ENCODE measurements at regions of chr20 and their contacts with region 1.

Region 1: GRCh38 chr20:2451939-2452732 is 18.5 kb downstream of the SNRPB start:
- DNase-seq: peak; percentile 92
- H3K4me3 ChIP-seq: no peak overlapping the region
- H3K27ac ChIP-seq: no peak overlapping the region
- H3K4me1 ChIP-seq: peaks cover 0 to 7% (median 0%) of the 10 kb centered on the region in 4 donors
- H3K27me3 ChIP-seq: no peaks in the 10 kb centered on the region
- CTCF ChIP-seq: peak; percentile 56 to 90 (median 73)
- EP300 ChIP-seq: no peak
- POLR2A ChIP-seq: no peak

Region 2: DNA sequence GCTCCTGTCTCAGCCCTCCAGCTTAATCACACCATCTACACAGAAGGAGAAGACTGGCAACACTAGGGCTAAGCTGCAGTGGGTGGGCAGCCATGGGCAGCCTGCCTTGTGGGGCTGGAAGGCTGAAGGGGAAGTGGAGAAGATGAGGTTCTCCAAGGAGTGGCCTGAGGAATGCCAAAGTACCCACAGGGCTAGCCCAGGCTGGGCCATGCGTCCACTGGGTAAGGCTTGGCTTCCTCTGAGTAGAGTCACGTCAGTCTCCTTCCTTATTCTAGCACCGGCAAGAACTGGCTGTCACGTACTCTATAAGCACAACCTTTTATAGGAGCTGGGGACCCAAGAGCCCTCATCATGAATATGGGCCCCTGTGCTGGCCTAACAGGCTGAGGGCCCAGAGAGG is 667.5 kb before region 1 on chr20:
- intact Hi-C with region 1: loop called (anchors 10 kb)
- DNase-seq: peak; percentile 68
- H3K4me3 ChIP-seq: no peak overlapping the region
- H3K27ac ChIP-seq: no peak overlapping the region
- H3K4me1 ChIP-seq: no peaks in the 10 kb centered on the region
- H3K27me3 ChIP-seq: peaks cover 0 to 57% (median 0%) of the 10 kb centered on the region in 4 donors
- CTCF ChIP-seq: no peak
- EP300 ChIP-seq: no peak
- POLR2A ChIP-seq: no peak

Region 3: GRCh38 chr20:2206957-2207769 is 245.0 kb before region 1 on chr20:
- intact Hi-C with region 1: loop called (anchors 5 kb)
- DNase-seq: no peak
- H3K4me3 ChIP-seq: peak overlapping the region; percentile 51 to 64 (median 58)
- H3K27ac ChIP-seq: no peak overlapping the region
- H3K4me1 ChIP-seq: peaks cover 13 to 14% (median 14%) of the 10 kb centered on the region in 4 donors
- H3K27me3 ChIP-seq: peaks cover 3 to 68% (median 7%) of the 10 kb centered on the region in 4 donors
- CTCF ChIP-seq: peak; percentile 53 to 61 (median 59)
- EP300 ChIP-seq: no peak
- POLR2A ChIP-seq: no peak

Region 4: DNA sequence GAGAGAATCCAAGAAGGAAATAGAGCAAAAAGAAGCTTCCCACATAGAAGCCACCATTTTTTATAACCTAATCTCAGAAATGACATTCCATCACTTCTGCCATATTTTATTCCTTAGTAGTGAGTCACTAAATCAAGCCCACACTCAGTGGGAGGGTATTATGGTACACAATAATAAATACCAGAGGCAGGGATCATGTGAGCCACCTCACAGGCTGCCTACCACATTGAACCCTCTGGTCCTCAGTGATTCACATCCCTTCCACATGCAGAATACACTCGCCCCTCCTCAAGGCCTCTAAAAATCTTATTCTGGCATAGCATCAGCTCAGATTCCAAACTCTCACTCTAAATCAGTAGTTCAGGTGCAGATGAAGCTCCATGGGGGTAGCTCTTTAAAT is 133.7 kb after region 1 on chr20:
- intact Hi-C with region 1: no loop called
- DNase-seq: peak; percentile 47
- H3K4me3 ChIP-seq: no peak overlapping the region
- H3K27ac ChIP-seq: no peak overlapping the region
- H3K4me1 ChIP-seq: no peaks in the 10 kb centered on the region
- H3K27me3 ChIP-seq: peaks cover 0 to 18% (median 0%) of the 10 kb centered on the region in 4 donors
- CTCF ChIP-seq: no peak
- EP300 ChIP-seq: no peak
- POLR2A ChIP-seq: no peak